ENCODE measurements at regions of chr3 and their contacts with region 1.

Region 1: GRCh38 chr3:185843126-185843525 is 18.3 kb upstream of the IGF2BP2 start:
- DNase-seq: no peak
- ATAC-seq: no peak
- H3K4me3 ChIP-seq: no peak overlapping the region
- H3K27ac ChIP-seq: no peak overlapping the region
- H3K4me1 ChIP-seq: no peaks in the 10 kb centered on the region
- H3K27me3 ChIP-seq: peaks cover 7% of the 10 kb centered on the region
- CTCF ChIP-seq: no peak
- POLR2A ChIP-seq: no peak
- RAD21 ChIP-seq: no peak

Region 2: GRCh38 chr3:185613016-185613415 is 230.1 kb before region 1 on chr3:
- CTCF ChIA-PET with region 1: no interaction called
- POLR2A ChIA-PET with region 1: no interaction called
- dilution Hi-C with region 1: no loop called
- in situ Hi-C with region 1: no loop called
- intact Hi-C with region 1: no loop called
- DNase-seq: no peak
- ATAC-seq: no peak
- H3K4me3 ChIP-seq: no peak overlapping the region
- H3K27ac ChIP-seq: no peak overlapping the region
- H3K4me1 ChIP-seq: no peaks in the 10 kb centered on the region
- H3K27me3 ChIP-seq: no peaks in the 10 kb centered on the region
- CTCF ChIP-seq: no peak
- POLR2A ChIP-seq: no peak
- RAD21 ChIP-seq: no peak

Region 3: GRCh38 chr3:185878920-185879319 is 35.8 kb after region 1 on chr3:
- CTCF ChIA-PET with region 1: interaction called, 3 read pairs
- POLR2A ChIA-PET with region 1: no interaction called
- dilution Hi-C with region 1: no loop called
- in situ Hi-C with region 1: loop called (anchors 5 kb)
- intact Hi-C with region 1: no loop called
- DNase-seq: no peak
- ATAC-seq: no peak
- H3K4me3 ChIP-seq: no peak overlapping the region
- H3K27ac ChIP-seq: no peak overlapping the region
- H3K4me1 ChIP-seq: no peaks in the 10 kb centered on the region
- H3K27me3 ChIP-seq: peaks cover 8% of the 10 kb centered on the region
- CTCF ChIP-seq: no peak
- POLR2A ChIP-seq: no peak
- RAD21 ChIP-seq: no peak

Measured in IMR-90 (cell line).